ENCODE measurements at regions of chr18 and their contacts with region 1.

Region 1: DNA sequence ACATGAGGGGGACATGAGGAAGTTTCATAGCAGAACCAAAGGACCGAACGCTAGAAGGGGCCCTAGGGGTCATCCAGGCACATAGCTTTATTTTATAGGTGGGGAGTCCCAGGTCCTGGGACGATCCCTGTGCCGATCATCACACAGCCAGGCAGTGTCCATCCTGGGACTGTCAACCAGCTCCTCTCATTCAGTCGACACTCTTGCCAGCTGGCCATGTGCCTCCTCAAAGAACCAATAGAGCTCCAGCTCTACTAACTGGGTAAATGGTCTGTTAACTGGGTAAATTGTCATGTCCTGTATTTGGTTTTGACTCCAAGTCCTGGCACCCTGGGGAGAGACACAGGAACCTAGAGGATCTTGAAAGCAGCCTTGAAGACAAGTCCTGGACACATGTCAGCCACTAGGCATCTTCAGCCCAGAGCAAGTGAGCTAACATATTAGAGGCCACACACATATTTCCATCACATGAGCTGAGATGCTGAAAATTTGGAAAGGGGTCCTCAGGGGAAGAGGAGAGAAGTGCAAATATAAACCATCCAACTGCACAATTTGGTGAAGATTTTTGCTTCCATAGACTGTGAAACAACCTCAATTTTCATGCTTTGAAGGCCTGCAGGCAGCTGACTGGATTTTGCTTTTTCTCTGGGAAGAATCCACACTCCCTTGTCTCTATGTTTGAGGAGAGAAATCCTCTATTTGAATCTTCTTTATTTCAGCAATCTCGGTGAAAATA is 361.1 kb upstream of the SLC14A2 start:
- DNase-seq: no peak
- H3K4me3 ChIP-seq: no peak overlapping the region
- H3K27ac ChIP-seq: peak overlapping the region; percentile 52 to 85
- H3K4me1 ChIP-seq: no peaks in the 10 kb centered on the region
- H3K27me3 ChIP-seq: no peaks in the 10 kb centered on the region
- CTCF ChIP-seq: no peak
- POLR2A ChIP-seq: no peak

Region 2: GRCh38 chr18:45291621-45292615 is 37.8 kb after region 1 on chr18:
- intact Hi-C with region 1: loop called (anchors 2 kb)
- DNase-seq: no peak
- H3K4me3 ChIP-seq: peak overlapping the region in 1 of 3 donors; percentile 18
- H3K27ac ChIP-seq: no peak overlapping the region
- H3K4me1 ChIP-seq: no peaks in the 10 kb centered on the region
- H3K27me3 ChIP-seq: no peaks in the 10 kb centered on the region
- CTCF ChIP-seq: no peak
- POLR2A ChIP-seq: no peak